ENCODE measurements at regions of chr6 and their contacts with region 1.

Region 1: GRCh38 chr6:113129991-113130390 is 727.2 kb upstream of the MARCKS start:
- DNase-seq: no peak
- H3K4me3 ChIP-seq: no peak overlapping the region
- H3K27ac ChIP-seq: no peak overlapping the region
- H3K4me1 ChIP-seq: no peaks in the 10 kb centered on the region
- H3K27me3 ChIP-seq: no peaks in the 10 kb centered on the region
- CTCF ChIP-seq: no peak

Region 2: DNA sequence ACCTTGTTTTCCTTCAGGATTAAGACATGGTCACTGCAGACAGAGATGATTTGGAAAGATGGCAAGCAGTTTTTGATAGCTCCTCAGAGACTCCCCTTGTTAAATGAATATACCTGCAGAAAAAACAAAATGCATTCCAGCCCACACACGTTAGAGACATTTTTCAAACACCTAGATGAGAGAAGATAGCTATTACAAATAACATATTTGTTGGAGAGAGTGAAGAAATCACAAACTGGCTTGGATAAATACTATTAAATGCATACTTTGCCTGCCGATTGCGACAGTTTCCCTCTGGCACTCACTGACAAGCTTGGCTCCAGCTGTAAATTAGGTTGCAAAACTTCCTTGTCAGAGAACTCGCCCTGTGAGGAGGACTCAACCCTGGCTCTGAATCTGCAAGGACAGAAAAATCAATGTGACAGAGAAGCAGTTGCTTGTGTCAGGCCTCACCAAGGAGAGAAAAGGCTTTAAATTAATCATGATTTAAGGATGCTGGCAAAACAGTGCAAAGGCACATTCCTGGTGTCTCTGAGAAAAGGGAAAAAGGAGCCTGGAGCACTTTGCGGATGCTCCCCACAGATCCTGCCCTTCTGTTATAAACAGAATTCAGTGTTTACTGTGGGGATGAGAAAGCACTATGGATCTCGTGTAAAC is 303.5 kb after region 1 on chr6:
- CTCF ChIA-PET with region 1: no interaction called
- POLR2A ChIA-PET with region 1: no interaction called
- intact Hi-C with region 1: no loop called
- DNase-seq: peak; percentile 61 to 99
- H3K4me3 ChIP-seq: peak overlapping the region; percentile 16; the same call in 1 of the 2 replicates
- H3K27ac ChIP-seq: peak overlapping the region; percentile 87
- H3K4me1 ChIP-seq: peaks cover 48% of the 10 kb centered on the region
- H3K27me3 ChIP-seq: no peaks in the 10 kb centered on the region
- CTCF ChIP-seq: no peak

Region 3: GRCh38 chr6:113596387-113597230 is 466.6 kb after region 1 on chr6:
- CTCF ChIA-PET with region 1: no interaction called
- POLR2A ChIA-PET with region 1: interaction called, 22 read pairs
- intact Hi-C with region 1: no loop called
- DNase-seq: peak; percentile 34 to 65
- H3K4me3 ChIP-seq: no peak overlapping the region
- H3K27ac ChIP-seq: 0 out of 2 replicates have a peak overlapping the region, but pooled peaks have one; percentile 3
- H3K4me1 ChIP-seq: no peaks in the 10 kb centered on the region; the same call in 1 of the 2 replicates
- H3K27me3 ChIP-seq: no peaks in the 10 kb centered on the region
- CTCF ChIP-seq: no peak